HCT116 (cell line): ENCODE measurements at regions of chr5 and their contacts with region 1.

Region 1: DNA sequence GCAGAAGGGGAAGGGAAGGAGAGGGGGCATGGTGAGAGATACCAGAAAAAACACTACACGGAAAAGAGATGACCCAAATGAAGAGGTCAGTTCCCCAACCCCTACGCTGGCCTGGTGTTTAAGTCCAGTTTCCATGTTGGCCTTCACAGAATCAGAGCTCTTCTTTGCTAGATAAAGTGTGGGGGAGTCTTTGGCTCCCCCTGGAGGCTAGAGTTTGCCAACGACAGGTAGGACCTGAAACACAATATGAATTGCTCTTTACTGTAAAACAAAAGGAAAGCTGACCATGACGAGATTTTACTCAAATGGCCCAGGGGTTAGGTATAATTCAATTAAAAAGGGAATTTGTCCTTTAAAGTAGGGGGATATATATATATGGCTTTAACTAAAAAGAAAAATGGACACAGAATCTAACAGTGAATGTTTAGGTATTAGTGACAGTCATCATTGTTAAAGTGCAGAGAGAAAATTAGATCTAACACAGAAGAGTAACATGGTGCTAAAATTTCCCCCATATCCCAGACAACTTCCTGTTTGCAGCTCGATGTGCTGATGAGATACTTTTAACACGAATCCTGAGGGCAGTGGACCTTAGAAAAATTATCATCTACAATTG is 92.0 kb downstream of the SV2C start:
- DNase-seq: peak; percentile 46
- ATAC-seq: peak; percentile 95
- H3K4me3 ChIP-seq: no peak overlapping the region
- H3K27ac ChIP-seq: no peak overlapping the region
- H3K4me1 ChIP-seq: no peaks in the 10 kb centered on the region
- H3K27me3 ChIP-seq: no peaks in the 10 kb centered on the region
- CTCF ChIP-seq: peak; percentile 47 to 89 (median 89); a peak in 5 of 6 replicates
- POLR2A ChIP-seq: no peak
- RAD21 ChIP-seq: peak; percentile 72

Region 2: DNA sequence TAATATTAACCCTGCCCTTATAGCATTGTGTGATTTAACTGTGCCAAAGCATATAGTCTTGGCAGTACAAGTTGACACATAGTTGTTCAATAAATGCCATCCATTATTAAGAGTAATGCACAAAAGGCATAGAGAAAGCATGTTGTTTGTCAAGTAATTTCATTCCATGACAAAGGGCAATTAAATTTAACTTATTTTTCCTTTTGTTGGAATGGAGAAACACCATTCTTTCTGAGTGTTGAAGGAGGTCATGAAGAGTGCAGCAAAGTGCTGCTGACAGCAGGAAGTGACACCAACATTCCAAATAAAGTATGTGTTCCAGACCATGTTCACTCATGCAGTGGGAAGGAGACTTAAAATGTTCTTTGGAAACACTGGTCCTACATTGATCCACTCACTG is 534.8 kb before region 1 on chr5:
- CTCF ChIA-PET with region 1: no interaction called
- POLR2A ChIA-PET with region 1: no interaction called
- RAD21 ChIA-PET with region 1: no interaction called
- intact Hi-C with region 1: no loop called
- DNase-seq: peak; percentile 4
- ATAC-seq: peak; percentile 52; the same call in 1 of the 2 replicates
- H3K4me3 ChIP-seq: no peak overlapping the region
- H3K27ac ChIP-seq: no peak overlapping the region
- H3K4me1 ChIP-seq: peaks cover 0 to 13% of the 10 kb centered on the region in 2 experiments; a peak in 2 of 4 replicates
- H3K27me3 ChIP-seq: no peaks in the 10 kb centered on the region
- CTCF ChIP-seq: no peak
- POLR2A ChIP-seq: no peak
- RAD21 ChIP-seq: no peak

Region 3: GRCh38 chr5:75734913-75735789 is 440.0 kb before region 1 on chr5:
- CTCF ChIA-PET with region 1: interaction called, 11 read pairs
- POLR2A ChIA-PET with region 1: no interaction called
- RAD21 ChIA-PET with region 1: no interaction called
- intact Hi-C with region 1: loop called (anchors 5 kb)
- DNase-seq: peak; percentile 3
- ATAC-seq: peak; percentile 87
- H3K4me3 ChIP-seq: no peak overlapping the region
- H3K27ac ChIP-seq: no peak overlapping the region
- H3K4me1 ChIP-seq: no peaks in the 10 kb centered on the region
- H3K27me3 ChIP-seq: no peaks in the 10 kb centered on the region
- CTCF ChIP-seq: peak; percentile 26 to 67 (median 51); a peak in 5 of 6 replicates
- POLR2A ChIP-seq: no peak
- RAD21 ChIP-seq: peak; percentile 62

Region 4: DNA sequence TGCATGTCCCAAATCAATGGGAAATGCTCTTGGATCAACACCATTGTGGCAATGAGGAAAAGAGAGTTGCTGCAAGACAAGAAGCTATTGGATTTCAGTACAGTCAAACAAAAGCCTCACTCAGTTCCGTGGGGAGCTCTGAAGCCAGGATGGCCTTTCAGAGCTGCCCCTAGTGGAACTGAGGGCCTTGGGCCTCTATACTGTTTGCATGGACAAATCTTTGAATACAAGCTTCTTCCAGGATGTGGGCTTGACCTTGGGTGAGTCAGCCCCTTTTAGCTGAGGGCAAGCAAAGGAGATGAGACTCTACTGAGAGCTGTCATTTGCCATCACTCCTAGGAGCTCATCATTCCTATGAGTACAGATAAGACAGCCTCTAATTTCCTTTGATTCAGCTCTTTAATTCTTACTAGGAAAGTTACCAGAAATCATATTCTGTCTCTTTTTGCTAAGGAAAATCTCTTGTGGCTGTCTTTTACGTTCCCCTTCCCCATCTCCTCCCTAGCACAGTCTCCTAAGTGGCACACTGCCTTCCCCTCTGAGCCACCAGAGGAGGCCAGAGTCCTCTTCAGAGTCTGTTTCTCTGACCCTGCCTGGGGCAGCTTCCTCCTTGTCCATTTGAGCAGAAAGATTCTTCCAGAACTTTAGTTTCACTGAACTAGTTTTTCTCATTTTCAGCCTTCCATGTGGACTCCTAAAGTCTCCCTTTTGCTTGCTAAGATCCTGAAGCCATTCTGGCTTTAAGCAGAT is 289.1 kb before region 1 on chr5:
- CTCF ChIA-PET with region 1: interaction called, 15 read pairs
- POLR2A ChIA-PET with region 1: no interaction called
- RAD21 ChIA-PET with region 1: no interaction called
- intact Hi-C with region 1: no loop called
- DNase-seq: no peak
- ATAC-seq: peak; percentile 57
- H3K4me3 ChIP-seq: no peak overlapping the region
- H3K27ac ChIP-seq: no peak overlapping the region
- H3K4me1 ChIP-seq: no peaks in the 10 kb centered on the region
- H3K27me3 ChIP-seq: no peaks in the 10 kb centered on the region
- CTCF ChIP-seq: peak; percentile 9 to 47 (median 39); a peak in 5 of 6 replicates
- POLR2A ChIP-seq: no peak
- RAD21 ChIP-seq: peak; percentile 29; the same call in 1 of the 2 replicates

Region 5: GRCh38 chr5:76145945-76146344 is 29.2 kb before region 1 on chr5:
- CTCF ChIA-PET with region 1: interaction called, 19 read pairs
- POLR2A ChIA-PET with region 1: interaction called, 3 read pairs
- RAD21 ChIA-PET with region 1: no interaction called
- intact Hi-C with region 1: no loop called
- DNase-seq: peak; percentile 51
- ATAC-seq: peak; percentile 90
- H3K4me3 ChIP-seq: no peak overlapping the region
- H3K27ac ChIP-seq: no peak overlapping the region
- H3K4me1 ChIP-seq: no peaks in the 10 kb centered on the region
- H3K27me3 ChIP-seq: peaks cover 10% of the 10 kb centered on the region; the same call in 1 of the 2 replicates
- CTCF ChIP-seq: peak; percentile 7 to 68 (median 57); a peak in 4 of 6 replicates
- POLR2A ChIP-seq: no peak
- RAD21 ChIP-seq: peak; percentile 31; the same call in 1 of the 2 replicates

Region 6: GRCh38 chr5:76191826-76192490 is 16.8 kb after region 1 on chr5:
- CTCF ChIA-PET with region 1: interaction called, 11 read pairs
- POLR2A ChIA-PET with region 1: no interaction called
- RAD21 ChIA-PET with region 1: interaction called in 1 of 2 experiments, 3 read pairs
- intact Hi-C with region 1: no loop called
- DNase-seq: no peak
- ATAC-seq: no peak
- H3K4me3 ChIP-seq: no peak overlapping the region
- H3K27ac ChIP-seq: no peak overlapping the region
- H3K4me1 ChIP-seq: no peaks in the 10 kb centered on the region
- H3K27me3 ChIP-seq: peaks cover 44% of the 10 kb centered on the region
- CTCF ChIP-seq: no peak
- POLR2A ChIP-seq: no peak
- RAD21 ChIP-seq: no peak